Activated CD8-positive, alpha-beta memory T cell treated with anti-CD3 and anti-CD28 coated beads, Interleukin-2, amount 10 ng/mL, durations not matched to agents 7 days and 5 days (primary cell): ENCODE measurements at regions of chr2 and their contacts with region 1.

Region 1: DNA sequence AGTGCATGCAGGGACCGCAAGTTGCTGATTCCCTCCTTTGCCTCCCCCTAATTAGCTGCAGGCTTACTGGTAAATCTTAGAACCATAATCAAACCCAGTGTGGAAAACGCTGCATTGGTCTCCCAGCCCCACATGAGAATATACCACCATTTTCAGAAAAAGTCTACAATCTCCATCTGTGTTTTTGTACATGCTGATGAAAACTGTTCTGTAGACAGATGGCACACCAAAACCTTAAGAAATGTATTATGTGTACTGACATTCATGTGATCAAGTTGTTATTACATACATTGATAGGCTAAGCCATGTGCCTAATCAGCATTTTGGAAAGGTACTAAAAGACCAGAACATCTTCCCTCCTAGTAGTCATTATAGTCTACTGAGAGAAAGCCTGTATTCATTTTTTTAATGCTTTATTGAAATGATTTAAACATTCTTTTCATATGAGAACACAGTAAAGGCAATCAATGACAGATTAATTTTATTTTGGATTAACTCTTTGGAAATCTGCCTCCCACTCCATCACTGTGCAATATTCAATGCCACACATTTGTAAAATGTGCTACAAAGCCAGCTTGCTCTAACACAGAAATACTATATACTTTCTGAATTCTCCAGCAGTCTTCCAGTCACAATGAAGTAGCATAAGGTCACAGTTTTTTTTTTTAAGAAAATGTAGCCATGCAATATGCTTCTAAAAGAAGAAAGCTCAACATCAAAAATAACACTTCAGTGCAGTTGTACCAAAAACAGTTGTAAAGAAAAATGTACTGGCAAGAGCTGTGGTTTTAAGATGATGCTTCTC is 1.8 kb upstream of the CRYGA start:
- DNase-seq: no peak
- ATAC-seq: no peak
- H3K4me3 Mint-ChIP-seq: no peak overlapping the region
- H3K27ac Mint-ChIP-seq: no peak overlapping the region
- H3K4me1 Mint-ChIP-seq: no peaks in the 10 kb centered on the region
- H3K27me3 Mint-ChIP-seq: peaks cover 31% of the 10 kb centered on the region

Region 2: GRCh38 chr2:208086029-208086428 is 79.1 kb before region 1 on chr2:
- CTCF ChIA-PET with region 1: no interaction called
- DNase-seq: no peak
- ATAC-seq: no peak
- H3K4me3 Mint-ChIP-seq: no peak overlapping the region
- H3K27ac Mint-ChIP-seq: no peak overlapping the region
- H3K4me1 Mint-ChIP-seq: no peaks in the 10 kb centered on the region
- H3K27me3 Mint-ChIP-seq: peaks cover 30% of the 10 kb centered on the region

Region 3: DNA sequence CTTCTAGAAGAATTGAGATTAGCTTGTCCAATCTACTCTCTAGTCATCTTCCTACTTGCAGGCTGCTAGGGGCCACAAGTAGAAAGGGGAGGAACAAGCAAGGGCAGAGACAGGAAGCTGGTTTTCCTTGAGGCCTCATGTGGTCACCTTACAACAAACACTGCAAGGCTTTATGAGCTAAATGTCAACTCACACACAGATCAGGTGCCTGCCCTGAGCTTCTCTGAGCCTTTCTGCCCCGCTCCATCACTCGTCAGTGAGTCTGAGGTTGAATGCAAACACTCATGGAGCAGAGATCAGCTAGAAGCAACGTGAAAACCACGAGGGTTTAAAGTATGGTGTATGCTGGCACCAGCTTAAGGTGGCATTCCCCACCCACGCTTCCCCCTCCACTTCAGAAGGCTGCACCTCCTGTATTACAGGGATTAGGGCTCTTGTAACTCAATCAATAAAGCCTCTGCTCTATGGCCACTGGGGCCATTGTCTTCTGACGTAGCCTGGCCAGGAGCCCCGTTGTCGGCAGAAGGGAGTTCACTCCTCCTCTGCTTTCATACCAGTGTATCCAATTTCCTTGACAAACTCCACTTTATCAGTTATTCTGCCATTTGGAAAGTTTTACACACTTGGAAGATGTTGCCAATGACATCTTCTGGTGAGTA is 30.1 kb before region 1 on chr2:
- CTCF ChIA-PET with region 1: no interaction called
- DNase-seq: peak; percentile 70
- ATAC-seq: peak; percentile 88
- H3K4me3 Mint-ChIP-seq: no peak overlapping the region
- H3K27ac Mint-ChIP-seq: peak overlapping the region; percentile 50
- H3K4me1 Mint-ChIP-seq: peaks cover 18% of the 10 kb centered on the region
- H3K27me3 Mint-ChIP-seq: peaks cover 10% of the 10 kb centered on the region

Region 4: GRCh38 chr2:208175069-208175839 is 10.1 kb after region 1 on chr2:
- CTCF ChIA-PET with region 1: interaction called, 10 read pairs
- DNase-seq: peak; percentile 68
- ATAC-seq: peak; percentile 98
- H3K4me3 Mint-ChIP-seq: no peak overlapping the region
- H3K27ac Mint-ChIP-seq: no peak overlapping the region
- H3K4me1 Mint-ChIP-seq: peaks cover 3% of the 10 kb centered on the region
- H3K27me3 Mint-ChIP-seq: peaks cover 9% of the 10 kb centered on the region

Region 5: GRCh38 chr2:208186465-208186864 is 21.3 kb after region 1 on chr2:
- CTCF ChIA-PET with region 1: no interaction called
- DNase-seq: no peak
- ATAC-seq: no peak
- H3K4me3 Mint-ChIP-seq: no peak overlapping the region
- H3K27ac Mint-ChIP-seq: no peak overlapping the region
- H3K4me1 Mint-ChIP-seq: peaks cover 3% of the 10 kb centered on the region
- H3K27me3 Mint-ChIP-seq: peaks cover 35% of the 10 kb centered on the region